Mammary epithelial cell (primary cell): ENCODE measurements at regions of chr3 and their contacts with region 1.

Region 1: DNA sequence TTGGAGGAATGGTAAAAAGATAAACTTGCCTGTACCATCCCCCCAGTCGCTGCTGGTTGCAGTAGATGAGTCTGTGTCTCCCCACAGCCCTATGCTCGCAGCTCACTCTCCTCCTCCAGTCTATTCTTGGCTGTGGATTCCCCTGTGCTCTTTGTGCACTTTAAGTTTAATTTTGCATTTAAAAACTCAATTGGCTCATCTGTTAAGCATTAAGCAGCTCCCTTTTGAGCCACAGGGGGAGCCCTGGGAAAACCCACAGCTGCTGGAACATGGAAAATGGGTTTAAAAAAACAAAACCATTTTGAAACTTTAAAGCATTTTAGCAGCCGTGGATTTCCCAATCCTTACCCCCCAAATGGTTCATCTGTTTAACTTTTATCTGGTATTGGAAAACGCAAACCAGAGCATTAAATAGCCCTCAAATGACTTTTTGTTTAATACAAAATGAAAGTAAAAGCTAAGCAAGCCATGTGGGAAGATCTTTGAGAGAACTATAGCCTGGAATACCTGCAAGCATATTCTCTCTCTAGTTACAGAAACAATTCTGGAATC is 536.9 kb downstream of the ZIC1 start:
- DNase-seq: peak; percentile 48
- H3K4me3 ChIP-seq: peak overlapping the region in 2 of 3 experiments; percentile 4 to 55
- H3K27ac ChIP-seq: no peak overlapping the region
- H3K4me1 ChIP-seq: peaks cover 17% of the 10 kb centered on the region
- H3K27me3 ChIP-seq: no peaks in the 10 kb centered on the region
- CTCF ChIP-seq: peak; percentile 60 to 68

Region 2: DNA sequence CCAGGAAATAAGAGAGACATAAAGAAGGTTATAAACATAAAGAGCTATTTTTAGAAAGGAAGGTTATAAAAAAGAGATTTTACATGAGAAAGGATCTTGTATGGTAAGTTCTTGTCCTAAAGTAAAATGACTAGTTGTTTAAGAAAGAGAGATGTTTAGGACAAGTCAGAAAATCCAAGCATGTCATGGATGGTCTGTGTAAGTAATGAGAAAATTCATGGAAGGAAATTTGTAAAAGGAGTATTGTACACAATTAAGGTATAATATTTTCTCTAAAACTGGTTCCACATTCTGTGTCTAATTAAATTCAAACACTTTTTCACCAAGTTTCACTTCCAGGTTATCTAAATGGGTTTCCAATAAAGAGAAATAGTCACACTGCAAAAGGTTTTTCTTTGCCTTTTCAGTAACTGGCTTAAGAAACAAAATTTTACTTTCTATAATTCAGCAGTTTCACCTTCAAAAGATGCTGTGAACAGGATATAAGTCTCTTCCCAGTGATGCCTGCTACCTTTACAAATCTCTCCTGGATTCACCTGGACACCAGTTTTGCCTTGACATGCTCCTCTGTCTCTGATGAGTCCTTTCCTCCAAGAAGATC is 81.2 kb before region 1 on chr3:
- CTCF ChIA-PET with region 1: no interaction called
- dilution Hi-C with region 1: no loop called
- in situ Hi-C with region 1: no loop called
- intact Hi-C with region 1: no loop called
- DNase-seq: no peak
- H3K4me3 ChIP-seq: no peak overlapping the region
- H3K27ac ChIP-seq: no peak overlapping the region
- H3K4me1 ChIP-seq: no peaks in the 10 kb centered on the region
- H3K27me3 ChIP-seq: no peaks in the 10 kb centered on the region
- CTCF ChIP-seq: no peak

Region 3: DNA sequence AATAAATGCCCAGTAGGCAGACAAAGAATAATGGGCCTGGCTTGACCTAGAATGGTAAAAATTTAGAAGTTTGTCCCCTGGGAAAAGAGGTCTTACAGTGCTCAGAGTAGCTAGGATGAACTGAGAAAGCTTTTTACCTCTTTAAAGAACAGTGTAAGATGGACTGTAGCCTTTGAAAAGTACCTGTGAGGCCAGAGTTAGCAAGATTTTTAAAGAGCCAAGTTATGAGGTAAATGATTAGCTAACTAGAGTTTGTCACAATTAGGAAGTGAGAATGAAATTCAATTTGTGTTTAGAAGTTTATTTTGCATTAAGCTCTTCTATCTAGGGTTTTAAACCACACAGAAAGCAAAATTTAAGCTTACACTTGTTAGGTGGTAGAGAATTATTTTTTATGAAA is 55.9 kb before region 1 on chr3:
- CTCF ChIA-PET with region 1: no interaction called
- dilution Hi-C with region 1: no loop called
- in situ Hi-C with region 1: no loop called
- intact Hi-C with region 1: no loop called
- DNase-seq: no peak
- H3K4me3 ChIP-seq: no peak overlapping the region
- H3K27ac ChIP-seq: no peak overlapping the region
- H3K4me1 ChIP-seq: no peaks in the 10 kb centered on the region
- H3K27me3 ChIP-seq: peaks cover 2% of the 10 kb centered on the region
- CTCF ChIP-seq: no peak

Region 4: DNA sequence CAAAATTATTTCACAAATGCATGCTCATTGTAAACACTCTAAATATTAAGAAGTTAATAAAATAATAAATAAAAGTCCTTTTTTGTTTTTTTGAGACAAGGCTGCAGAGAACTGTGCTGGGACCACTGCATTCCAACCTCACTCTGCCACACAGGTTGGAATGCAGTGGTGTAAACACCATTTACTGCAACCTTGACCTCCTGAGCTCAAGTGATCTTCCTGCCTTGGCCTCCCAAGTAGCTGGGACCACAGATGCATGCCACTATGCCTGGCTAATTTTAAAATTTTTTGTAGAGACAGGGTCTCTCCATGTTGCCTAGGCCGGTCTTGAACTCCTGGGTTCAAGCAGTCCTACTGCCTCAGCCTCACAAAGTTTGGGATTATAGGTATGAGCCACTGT is 41.5 kb after region 1 on chr3:
- CTCF ChIA-PET with region 1: no interaction called
- dilution Hi-C with region 1: no loop called
- in situ Hi-C with region 1: no loop called
- intact Hi-C with region 1: no loop called
- DNase-seq: no peak
- H3K4me3 ChIP-seq: no peak overlapping the region
- H3K27ac ChIP-seq: no peak overlapping the region
- H3K4me1 ChIP-seq: no peaks in the 10 kb centered on the region
- H3K27me3 ChIP-seq: no peaks in the 10 kb centered on the region
- CTCF ChIP-seq: no peak

Region 5: GRCh38 chr3:148066787-148067186 is 120.7 kb after region 1 on chr3:
- CTCF ChIA-PET with region 1: interaction called, 17 read pairs
- dilution Hi-C with region 1: no loop called
- in situ Hi-C with region 1: no loop called
- intact Hi-C with region 1: no loop called
- DNase-seq: no peak
- H3K4me3 ChIP-seq: no peak overlapping the region
- H3K27ac ChIP-seq: no peak overlapping the region
- H3K4me1 ChIP-seq: no peaks in the 10 kb centered on the region
- H3K27me3 ChIP-seq: no peaks in the 10 kb centered on the region
- CTCF ChIP-seq: no peak